GM12878 (cell line): ENCODE measurements at regions of chr16 and their contacts with region 1.

Region 1: GRCh38 chr16:28823872-28824716 is 1.3 kb downstream of the ATXN2L start:
- DNase-seq: peak; percentile 86
- ATAC-seq: peak; percentile 90
- H3K4me3 ChIP-seq: peak overlapping the region; percentile 73
- H3K27ac ChIP-seq: peak overlapping the region; percentile 97
- H3K4me1 ChIP-seq: peaks cover 8% of the 10 kb centered on the region; the same call in 1 of the 2 replicates
- H3K27me3 ChIP-seq: no peaks in the 10 kb centered on the region
- CTCF ChIP-seq: 0 out of 6 replicates have a peak, but pooled peaks of 1 of the 3 experiments have one; percentile 13
- EP300 ChIP-seq: no peak
- POLR2A ChIP-seq: peak; percentile 66
- RAD21 ChIP-seq: no peak

Region 2: DNA sequence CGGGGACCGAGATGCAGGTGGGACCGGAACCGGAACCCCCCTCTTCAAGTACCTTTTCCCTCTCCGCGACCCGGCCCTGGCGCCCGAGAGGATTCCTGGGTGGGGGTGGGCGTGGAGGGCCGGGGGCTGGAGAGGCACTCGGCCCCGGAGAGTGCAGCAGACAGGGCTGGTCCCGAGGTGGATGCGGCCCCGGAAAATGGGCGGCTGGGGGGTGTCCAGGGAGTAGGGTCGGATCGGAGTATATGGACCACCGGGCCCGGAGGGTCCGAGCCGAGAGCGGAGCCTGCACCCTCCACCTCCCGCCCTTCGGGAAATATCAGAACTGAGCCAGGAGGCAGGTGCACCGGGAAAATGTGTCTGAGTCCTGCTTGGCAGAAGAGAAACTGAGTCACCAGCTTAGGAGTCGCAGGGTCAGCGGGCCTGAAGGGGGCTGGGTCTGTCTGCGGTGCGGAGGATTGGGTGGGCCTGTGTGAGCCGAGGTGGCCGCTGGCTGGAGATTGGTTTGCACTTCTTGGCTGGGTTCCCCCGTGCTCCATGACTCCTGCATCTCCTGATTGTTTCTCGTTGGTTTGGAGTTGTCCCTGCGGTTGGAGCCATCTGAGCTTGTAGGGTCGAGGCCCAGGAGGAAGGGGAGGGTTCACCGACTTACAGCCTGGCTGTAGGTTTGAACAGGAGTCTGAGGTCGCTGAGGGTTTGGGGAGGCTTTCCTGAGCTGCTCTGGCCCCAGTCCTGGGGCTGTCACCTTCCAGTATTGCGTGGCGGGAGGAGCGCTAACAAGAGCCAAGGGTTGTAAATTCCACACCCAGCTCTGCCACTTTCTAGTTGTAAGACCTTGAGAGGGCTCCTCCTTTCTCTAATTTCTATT is 40.1 kb after region 1 on chr16:
- CTCF ChIA-PET with region 1: interaction called, 4 read pairs
- POLR2A ChIA-PET with region 1: interaction called, 3 read pairs
- RAD21 ChIA-PET with region 1: no interaction called
- SMC1A ChIA-PET with region 1: interaction called, 12 read pairs
- in situ Hi-C with region 1: no loop called
- intact Hi-C with region 1: no loop called
- DNase-seq: no peak
- ATAC-seq: peak; percentile 19
- H3K4me3 ChIP-seq: peak overlapping the region; percentile 78
- H3K27ac ChIP-seq: peak overlapping the region; percentile 99
- H3K4me1 ChIP-seq: peaks cover 10% of the 10 kb centered on the region
- H3K27me3 ChIP-seq: no peaks in the 10 kb centered on the region
- CTCF ChIP-seq: no peak
- EP300 ChIP-seq: no peak
- POLR2A ChIP-seq: no peak
- RAD21 ChIP-seq: no peak

Region 3: DNA sequence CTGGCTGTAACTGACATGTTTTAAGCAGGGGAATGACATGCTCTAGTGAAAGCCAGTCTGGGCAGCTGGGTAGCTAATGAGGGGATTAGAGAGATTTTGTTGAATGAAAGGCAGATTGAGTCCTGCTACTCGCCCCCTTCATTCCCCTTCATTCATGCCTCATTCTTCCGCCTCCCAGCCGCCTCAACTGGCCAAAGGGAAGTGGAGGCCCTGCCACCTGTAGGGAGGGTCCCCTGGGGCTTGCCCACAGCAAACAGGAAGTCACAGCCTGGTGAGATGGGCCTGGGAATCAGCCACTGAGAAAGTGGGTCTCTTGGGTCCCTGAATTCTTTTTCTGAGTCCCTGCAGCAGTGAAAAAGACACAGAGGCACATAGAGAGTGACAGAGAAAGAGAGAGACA is 106.6 kb after region 1 on chr16:
- CTCF ChIA-PET with region 1: interaction called, 3 read pairs
- POLR2A ChIA-PET with region 1: interaction called, 13 read pairs
- RAD21 ChIA-PET with region 1: interaction called, 7 read pairs
- SMC1A ChIA-PET with region 1: interaction called, 5 read pairs
- in situ Hi-C with region 1: no loop called
- intact Hi-C with region 1: loop called (anchors 2 kb)
- DNase-seq: peak; percentile 86
- ATAC-seq: peak; percentile 65
- H3K4me3 ChIP-seq: no peak overlapping the region
- H3K27ac ChIP-seq: peak overlapping the region; percentile 92
- H3K4me1 ChIP-seq: peaks cover 16% of the 10 kb centered on the region
- H3K27me3 ChIP-seq: no peaks in the 10 kb centered on the region
- CTCF ChIP-seq: no peak
- EP300 ChIP-seq: peak in 1 of 2 experiments; percentile 37; a peak in 1 of 4 replicates
- POLR2A ChIP-seq: peak; percentile 23; the same call in 1 of the 2 replicates
- RAD21 ChIP-seq: no peak